ENCODE measurements at regions of chr5 and their contacts with region 1.

Region 1: DNA sequence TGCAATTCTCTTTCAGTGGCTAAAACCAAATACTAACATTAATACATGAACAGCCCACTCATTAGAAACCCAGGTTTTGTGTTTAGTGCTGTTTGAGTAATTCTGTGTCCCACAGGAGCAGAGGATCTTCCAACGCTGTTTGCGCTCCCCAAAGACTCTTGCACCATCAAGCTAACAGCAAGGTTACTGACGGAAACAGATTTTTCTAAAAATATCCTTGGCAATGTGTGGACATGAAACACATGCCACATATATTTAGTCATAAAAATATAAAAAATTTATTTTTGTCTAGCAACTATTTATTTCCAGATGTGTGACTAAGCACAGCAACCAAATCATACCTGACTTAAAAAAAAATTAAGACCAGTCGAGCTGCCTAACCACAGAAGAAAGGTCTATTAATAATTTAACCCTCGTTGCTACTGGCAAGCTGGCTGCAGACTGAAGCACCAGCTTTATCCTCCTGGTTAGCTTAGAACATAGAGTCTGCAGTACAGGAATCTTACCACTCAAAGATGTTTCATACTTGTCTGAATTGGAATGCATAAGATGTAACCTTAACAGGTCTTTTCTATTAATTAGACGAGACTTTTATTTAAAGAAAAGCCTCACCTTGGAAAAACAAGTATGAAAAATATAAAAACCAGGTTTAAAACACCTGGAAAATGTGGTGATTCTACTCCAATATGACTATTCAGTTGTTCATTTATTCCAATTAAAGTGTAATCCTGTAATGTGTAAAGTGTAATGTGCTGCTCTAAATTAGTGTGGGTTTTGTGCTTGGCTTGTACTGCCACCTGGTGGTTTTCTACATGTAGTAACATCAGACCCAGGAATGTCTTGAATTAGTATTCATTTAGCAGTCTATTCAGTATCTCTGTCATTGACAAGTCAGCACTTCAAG is 272.5 kb downstream of the EPB41L4A start:
- DNase-seq: peak in 1 of 3 donors; percentile 74
- ATAC-seq: peak; percentile 84
- H3K4me3 ChIP-seq: no peak overlapping the region
- H3K4me1 ChIP-seq: no peaks in the 10 kb centered on the region
- CTCF ChIP-seq: peak; percentile 80

Region 2: GRCh38 chr5:111550279-111551020 is 596.1 kb before region 1 on chr5:
- intact Hi-C with region 1: loop called (anchors 5 kb)
- DNase-seq: peak in 2 of 3 donors; percentile 30 to 91
- ATAC-seq: peak; percentile 84
- H3K4me3 ChIP-seq: no peak overlapping the region
- H3K4me1 ChIP-seq: peaks cover 5% of the 10 kb centered on the region
- CTCF ChIP-seq: no peak

Measured in mucosa of descending colon (tissue), 3 donors.